Caco-2 (cell line): ENCODE measurements at regions of chr9 and their contacts with region 1.

Region 1: DNA sequence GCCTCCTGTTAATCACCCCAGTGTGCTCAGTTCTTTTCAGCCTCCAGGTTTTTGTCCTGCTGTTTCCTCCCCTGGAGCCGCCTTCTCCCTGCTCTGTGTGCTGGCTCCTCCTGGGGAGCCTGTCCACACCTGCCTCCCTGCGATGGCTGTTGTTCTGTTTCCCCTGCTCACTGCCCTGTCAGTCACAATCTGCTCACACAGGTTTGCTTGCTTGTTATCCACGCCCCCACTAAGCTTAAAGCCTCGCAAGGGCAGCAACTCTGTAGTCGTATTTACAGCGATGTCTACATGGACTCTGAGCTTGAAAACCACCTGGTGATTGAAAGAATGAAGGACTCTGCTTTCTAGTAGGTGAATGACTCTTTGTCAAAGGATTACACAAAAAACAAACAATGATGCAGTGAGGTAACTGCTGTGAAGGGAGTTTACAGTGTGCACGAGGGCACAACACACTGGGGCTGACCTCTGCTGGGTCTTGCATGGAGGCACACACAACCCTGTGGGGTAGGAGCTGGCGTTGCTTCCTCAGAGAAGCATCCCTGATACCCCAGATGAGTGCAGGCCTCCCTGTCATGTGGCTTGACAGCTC is 39.6 kb upstream of the TEX48 start:
- DNase-seq: peak; percentile 75 to 80
- H3K4me3 ChIP-seq: no peak overlapping the region
- H3K4me3 Mint-ChIP-seq: peak overlapping the region; percentile 47
- H3K27ac Mint-ChIP-seq: peak overlapping the region; percentile 71
- H3K4me1 ChIP-seq: peaks cover 10% of the 10 kb centered on the region; the same call in 1 of the 2 replicates
- H3K4me1 Mint-ChIP-seq: peaks cover 7% of the 10 kb centered on the region
- H3K27me3 ChIP-seq: no peaks in the 10 kb centered on the region; the same call in 1 of the 2 replicates
- H3K27me3 Mint-ChIP-seq: peaks cover 2% of the 10 kb centered on the region
- CTCF ChIP-seq: peak in 1 of 2 experiments; percentile 29

Region 2: DNA sequence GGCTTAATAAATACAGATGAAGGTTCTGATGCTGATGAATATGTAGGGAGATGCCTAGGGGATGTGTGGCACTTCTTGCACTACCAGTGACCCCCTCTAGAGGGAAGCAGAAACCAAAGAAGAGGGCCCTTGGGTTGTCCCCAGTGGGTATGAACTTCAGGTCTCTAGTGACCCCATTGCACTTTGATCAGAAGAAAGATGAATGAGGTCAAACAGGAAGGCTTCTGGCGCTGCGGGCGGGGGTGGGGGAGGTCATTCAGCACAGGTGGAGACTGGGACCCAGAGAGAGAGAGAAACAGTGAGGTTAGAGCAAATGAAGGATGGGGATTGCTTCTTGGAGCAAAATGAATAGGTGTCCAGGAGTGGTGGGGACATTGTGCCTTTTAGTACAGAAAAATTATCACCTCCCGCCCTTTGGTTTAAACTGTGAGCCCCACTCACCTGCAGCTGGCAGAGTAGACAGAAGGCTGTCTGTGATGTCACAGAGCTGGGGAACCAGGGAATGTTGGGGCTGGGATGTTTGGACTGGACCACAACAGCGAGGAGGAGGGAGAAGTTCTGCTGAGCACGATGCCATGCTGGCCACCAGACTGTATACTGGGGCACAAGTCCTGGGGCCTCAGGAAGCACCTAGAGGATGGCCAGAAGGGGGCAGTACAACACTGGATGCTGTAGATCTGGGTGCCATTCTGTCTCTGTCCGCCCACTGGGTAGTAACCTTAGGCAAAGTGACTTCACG is 39.8 kb before region 1 on chr9 and contains the start of gene TEX48:
- CTCF ChIA-PET with region 1: no interaction called
- POLR2A ChIA-PET with region 1: no interaction called
- intact Hi-C with region 1: loop called (anchors 1 kb)
- DNase-seq: peak; percentile 73 to 83
- H3K4me3 ChIP-seq: no peak within 1 kb of the TSS
- H3K4me3 Mint-ChIP-seq: no peak within 1 kb of the TSS
- H3K27ac Mint-ChIP-seq: no peak within 1 kb of the TSS
- H3K4me1 ChIP-seq: no peaks in the 10 kb centered on the region; the same call in 1 of the 2 replicates
- H3K4me1 Mint-ChIP-seq: peaks cover 16% of the 10 kb centered on the region
- H3K27me3 ChIP-seq: no peaks in the 10 kb centered on the region
- H3K27me3 Mint-ChIP-seq: no peaks in the 10 kb centered on the region
- CTCF ChIP-seq: peak; percentile 80 to 86
- total RNA-seq, gene TEX48: not detected in 2 replicates

Region 3: GRCh38 chr9:114745108-114745848 is 23.7 kb after region 1 on chr9:
- CTCF ChIA-PET with region 1: no interaction called
- POLR2A ChIA-PET with region 1: no interaction called
- intact Hi-C with region 1: no loop called
- DNase-seq: no peak
- H3K4me3 ChIP-seq: no peak overlapping the region
- H3K4me3 Mint-ChIP-seq: no peak overlapping the region
- H3K27ac Mint-ChIP-seq: no peak overlapping the region
- H3K4me1 ChIP-seq: no peaks in the 10 kb centered on the region
- H3K4me1 Mint-ChIP-seq: no peaks in the 10 kb centered on the region
- H3K27me3 ChIP-seq: no peaks in the 10 kb centered on the region
- H3K27me3 Mint-ChIP-seq: no peaks in the 10 kb centered on the region
- CTCF ChIP-seq: no peak

Region 4: DNA sequence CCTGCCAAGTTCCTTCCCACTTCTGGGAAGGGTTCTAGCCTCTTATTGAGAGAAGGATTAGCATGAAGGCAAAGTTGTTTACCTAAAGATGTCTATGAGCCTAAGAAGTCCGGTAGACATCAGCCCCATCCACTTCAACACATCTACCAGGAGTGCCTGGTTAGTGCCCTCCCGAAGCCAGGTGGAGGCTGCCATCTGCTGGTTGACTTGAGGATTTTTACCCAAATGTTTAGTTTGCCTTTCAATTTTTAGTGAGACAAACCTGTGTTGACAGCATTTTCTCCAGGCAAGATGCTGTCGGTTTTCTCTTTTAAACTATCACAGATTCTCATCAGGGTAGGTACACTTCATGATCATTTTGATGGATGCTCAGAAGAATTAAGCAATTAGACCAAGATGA is 292.4 kb after region 1 on chr9:
- CTCF ChIA-PET with region 1: no interaction called
- POLR2A ChIA-PET with region 1: no interaction called
- intact Hi-C with region 1: no loop called
- DNase-seq: peak; percentile 77 to 78
- H3K4me3 ChIP-seq: no peak overlapping the region
- H3K4me3 Mint-ChIP-seq: no peak overlapping the region
- H3K27ac Mint-ChIP-seq: no peak overlapping the region
- H3K4me1 ChIP-seq: peaks cover 13% of the 10 kb centered on the region
- H3K4me1 Mint-ChIP-seq: peaks cover 29% of the 10 kb centered on the region
- H3K27me3 ChIP-seq: no peaks in the 10 kb centered on the region
- H3K27me3 Mint-ChIP-seq: no peaks in the 10 kb centered on the region
- CTCF ChIP-seq: peak; percentile 77 to 85